B cell (primary cell): ENCODE measurements at regions of chr11 and their contacts with region 1.

Region 1: GRCh38 chr11:111230122-111230465 is 15.4 kb upstream of the POU2AF2 start:
- DNase-seq: no peak
- ATAC-seq: peak; percentile 35
- H3K4me3 ChIP-seq: peak overlapping the region in 3 of 5 experiments; percentile 32 to 46 (median 36)
- H3K4me3 Mint-ChIP-seq: peak overlapping the region; percentile 79
- H3K27ac ChIP-seq: no peak overlapping the region
- H3K27ac Mint-ChIP-seq: peak overlapping the region; percentile 74
- H3K4me1 ChIP-seq: peaks cover 23 to 24% of the 10 kb centered on the region in 2 donors
- H3K4me1 Mint-ChIP-seq: peaks cover 37% of the 10 kb centered on the region
- H3K27me3 ChIP-seq: no peaks in the 10 kb centered on the region
- H3K27me3 Mint-ChIP-seq: no peaks in the 10 kb centered on the region
- CTCF ChIP-seq: no peak

Region 2: GRCh38 chr11:110296226-110297075 is 933.6 kb before region 1 on chr11 and contains the start of gene RDX:
- CTCF ChIA-PET with region 1: no interaction called
- POLR2A ChIA-PET with region 1: no interaction called
- intact Hi-C with region 1: loop called (anchors 5 kb)
- DNase-seq: peak; percentile 83
- ATAC-seq: peak; percentile 84
- H3K4me3 ChIP-seq: peak within 1 kb of the TSS; percentile 50 to 93 (median 86)
- H3K4me3 Mint-ChIP-seq: peak within 1 kb of the TSS; percentile 94
- H3K27ac ChIP-seq: peak within 1 kb of the TSS; percentile 18 to 70
- H3K27ac Mint-ChIP-seq: peak within 1 kb of the TSS; percentile 80
- H3K4me1 ChIP-seq: peaks cover 8 to 12% of the 10 kb centered on the region in 2 donors
- H3K4me1 Mint-ChIP-seq: peaks cover 24% of the 10 kb centered on the region
- H3K27me3 ChIP-seq: peaks cover 0 to 3% (median 0%) of the 10 kb centered on the region in 4 experiments
- H3K27me3 Mint-ChIP-seq: no peaks in the 10 kb centered on the region
- CTCF ChIP-seq: no peak
- total RNA-seq, gene RDX: 34.8 and 39.2 TPM in 2 replicates

Region 3: GRCh38 chr11:110434952-110435779 is 794.9 kb before region 1 on chr11:
- CTCF ChIA-PET with region 1: interaction called, 68 read pairs
- POLR2A ChIA-PET with region 1: no interaction called
- intact Hi-C with region 1: loop called (anchors 1 kb)
- DNase-seq: peak; percentile 41
- ATAC-seq: no peak
- H3K4me3 ChIP-seq: no peak overlapping the region
- H3K4me3 Mint-ChIP-seq: no peak overlapping the region
- H3K27ac ChIP-seq: no peak overlapping the region
- H3K27ac Mint-ChIP-seq: no peak overlapping the region
- H3K4me1 ChIP-seq: peaks cover 16 to 25% of the 10 kb centered on the region in 2 donors
- H3K4me1 Mint-ChIP-seq: peaks cover 35% of the 10 kb centered on the region
- H3K27me3 ChIP-seq: no peaks in the 10 kb centered on the region
- H3K27me3 Mint-ChIP-seq: no peaks in the 10 kb centered on the region
- CTCF ChIP-seq: peak; percentile 51

Region 4: GRCh38 chr11:110463153-110463552 is 766.9 kb before region 1 on chr11:
- CTCF ChIA-PET with region 1: interaction called, 33 read pairs
- POLR2A ChIA-PET with region 1: no interaction called
- intact Hi-C with region 1: loop called (anchors 1 kb)
- DNase-seq: peak; percentile 47
- ATAC-seq: peak; percentile 33
- H3K4me3 ChIP-seq: no peak overlapping the region
- H3K4me3 Mint-ChIP-seq: no peak overlapping the region
- H3K27ac ChIP-seq: no peak overlapping the region
- H3K27ac Mint-ChIP-seq: no peak overlapping the region
- H3K4me1 ChIP-seq: no peaks in the 10 kb centered on the region
- H3K4me1 Mint-ChIP-seq: peaks cover 1% of the 10 kb centered on the region
- H3K27me3 ChIP-seq: no peaks in the 10 kb centered on the region
- H3K27me3 Mint-ChIP-seq: no peaks in the 10 kb centered on the region
- CTCF ChIP-seq: peak; percentile 46

Region 5: GRCh38 chr11:111177037-111177871 is 52.8 kb before region 1 on chr11:
- CTCF ChIA-PET with region 1: interaction called, 5 read pairs
- POLR2A ChIA-PET with region 1: interaction called, 3 read pairs
- intact Hi-C with region 1: loop called (anchors 2 kb)
- DNase-seq: peak; percentile 86
- ATAC-seq: peak; percentile 83
- H3K4me3 ChIP-seq: peak overlapping the region in 2 of 5 experiments; percentile 29 to 42
- H3K4me3 Mint-ChIP-seq: peak overlapping the region; percentile 69
- H3K27ac ChIP-seq: peak overlapping the region; percentile 84 to 90
- H3K27ac Mint-ChIP-seq: peak overlapping the region; percentile 95
- H3K4me1 ChIP-seq: peaks cover 62 to 64% of the 10 kb centered on the region in 2 donors
- H3K4me1 Mint-ChIP-seq: peaks cover 67% of the 10 kb centered on the region
- H3K27me3 ChIP-seq: no peaks in the 10 kb centered on the region
- H3K27me3 Mint-ChIP-seq: no peaks in the 10 kb centered on the region
- CTCF ChIP-seq: no peak

Region 6: GRCh38 chr11:111213256-111213655 is 16.8 kb before region 1 on chr11:
- CTCF ChIA-PET with region 1: interaction called, 16 read pairs
- POLR2A ChIA-PET with region 1: no interaction called
- intact Hi-C with region 1: no loop called
- DNase-seq: no peak
- ATAC-seq: no peak
- H3K4me3 ChIP-seq: no peak overlapping the region
- H3K4me3 Mint-ChIP-seq: no peak overlapping the region
- H3K27ac ChIP-seq: no peak overlapping the region
- H3K27ac Mint-ChIP-seq: no peak overlapping the region
- H3K4me1 ChIP-seq: no peaks in the 10 kb centered on the region
- H3K4me1 Mint-ChIP-seq: no peaks in the 10 kb centered on the region
- H3K27me3 ChIP-seq: no peaks in the 10 kb centered on the region
- H3K27me3 Mint-ChIP-seq: no peaks in the 10 kb centered on the region
- CTCF ChIP-seq: no peak

Region 7: DNA sequence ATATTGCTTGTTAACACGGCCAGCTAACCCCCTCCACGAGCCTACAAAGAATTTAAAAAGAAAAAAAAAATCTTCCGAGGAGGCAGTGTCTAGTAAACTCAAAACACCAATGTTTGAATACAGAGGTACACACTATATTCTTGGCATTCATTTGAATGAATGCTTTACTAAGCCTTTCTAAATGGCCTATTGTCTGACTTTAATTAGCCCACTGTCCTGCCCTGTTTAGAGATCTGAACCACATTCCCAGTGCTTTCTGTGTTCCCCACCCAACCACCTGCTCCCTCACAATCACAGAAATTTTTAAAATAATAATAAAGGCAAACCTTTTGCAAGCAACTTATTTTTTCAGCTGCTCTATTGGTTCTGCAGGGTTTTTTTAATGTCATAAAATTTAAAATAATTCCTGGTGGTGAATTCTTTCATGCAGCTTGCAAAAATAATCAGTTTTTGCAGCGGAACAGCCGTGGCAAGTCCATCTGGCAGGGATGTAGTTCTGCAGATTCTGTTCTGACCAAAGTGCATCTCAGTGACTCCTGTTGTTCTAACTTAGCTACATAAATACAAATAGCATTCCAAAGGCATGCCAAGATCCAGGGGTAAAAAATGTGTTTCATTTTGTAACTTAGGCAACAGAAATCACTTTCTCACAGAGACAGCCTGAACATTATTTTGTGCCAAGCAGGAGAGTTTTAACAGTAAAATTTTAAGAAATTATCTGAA is 39.2 kb after region 1 on chr11:
- CTCF ChIA-PET with region 1: no interaction called
- POLR2A ChIA-PET with region 1: no interaction called
- intact Hi-C with region 1: no loop called
- DNase-seq: no peak
- ATAC-seq: no peak
- H3K4me3 ChIP-seq: no peak overlapping the region
- H3K4me3 Mint-ChIP-seq: no peak overlapping the region
- H3K27ac ChIP-seq: no peak overlapping the region
- H3K27ac Mint-ChIP-seq: no peak overlapping the region
- H3K4me1 ChIP-seq: peaks cover 8 to 13% of the 10 kb centered on the region in 2 donors
- H3K4me1 Mint-ChIP-seq: peaks cover 17% of the 10 kb centered on the region
- H3K27me3 ChIP-seq: no peaks in the 10 kb centered on the region
- H3K27me3 Mint-ChIP-seq: peaks cover 3% of the 10 kb centered on the region
- CTCF ChIP-seq: no peak